Common myeloid progenitor, CD34-positive (primary cell): ENCODE measurements at regions of chr10 and their contacts with region 1.

Region 1: GRCh38 chr10:80504158-80504811 is 33.4 kb upstream of the SH2D4B start:
- DNase-seq: peak in 2 of 3 donors; percentile 33 to 53
- H3K4me3 ChIP-seq: no peak overlapping the region
- H3K27ac ChIP-seq: no peak overlapping the region
- H3K4me1 ChIP-seq: peaks cover 10 to 65% (median 39%) of the 10 kb centered on the region in 4 experiments
- H3K27me3 ChIP-seq: no peaks in the 10 kb centered on the region

Region 2: DNA sequence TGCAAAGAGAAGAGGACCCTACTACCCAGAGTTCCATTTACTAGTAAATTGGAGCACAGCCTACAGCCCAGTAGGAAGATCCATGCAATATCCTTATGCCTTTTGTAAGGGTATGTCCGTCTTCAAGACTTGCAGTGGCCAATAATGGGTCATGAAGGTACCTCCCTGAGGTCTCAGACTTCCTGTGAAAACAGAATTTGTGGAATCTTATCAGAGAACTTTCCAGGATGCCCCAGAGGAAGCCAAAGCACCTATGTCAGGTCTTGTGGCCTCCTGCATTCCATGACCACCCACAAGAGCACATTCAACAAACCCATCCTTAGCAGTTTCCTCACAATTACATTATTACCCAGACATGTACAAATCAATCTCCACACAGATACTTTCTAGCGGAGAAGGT is 114.5 kb before region 1 on chr10:
- CTCF ChIA-PET with region 1: interaction called, 25 read pairs
- POLR2A ChIA-PET with region 1: no interaction called
- DNase-seq: no peak
- H3K4me3 ChIP-seq: no peak overlapping the region
- H3K27ac ChIP-seq: no peak overlapping the region
- H3K4me1 ChIP-seq: peaks cover 0 to 17% (median 12%) of the 10 kb centered on the region in 4 experiments
- H3K27me3 ChIP-seq: no peaks in the 10 kb centered on the region

Region 3: DNA sequence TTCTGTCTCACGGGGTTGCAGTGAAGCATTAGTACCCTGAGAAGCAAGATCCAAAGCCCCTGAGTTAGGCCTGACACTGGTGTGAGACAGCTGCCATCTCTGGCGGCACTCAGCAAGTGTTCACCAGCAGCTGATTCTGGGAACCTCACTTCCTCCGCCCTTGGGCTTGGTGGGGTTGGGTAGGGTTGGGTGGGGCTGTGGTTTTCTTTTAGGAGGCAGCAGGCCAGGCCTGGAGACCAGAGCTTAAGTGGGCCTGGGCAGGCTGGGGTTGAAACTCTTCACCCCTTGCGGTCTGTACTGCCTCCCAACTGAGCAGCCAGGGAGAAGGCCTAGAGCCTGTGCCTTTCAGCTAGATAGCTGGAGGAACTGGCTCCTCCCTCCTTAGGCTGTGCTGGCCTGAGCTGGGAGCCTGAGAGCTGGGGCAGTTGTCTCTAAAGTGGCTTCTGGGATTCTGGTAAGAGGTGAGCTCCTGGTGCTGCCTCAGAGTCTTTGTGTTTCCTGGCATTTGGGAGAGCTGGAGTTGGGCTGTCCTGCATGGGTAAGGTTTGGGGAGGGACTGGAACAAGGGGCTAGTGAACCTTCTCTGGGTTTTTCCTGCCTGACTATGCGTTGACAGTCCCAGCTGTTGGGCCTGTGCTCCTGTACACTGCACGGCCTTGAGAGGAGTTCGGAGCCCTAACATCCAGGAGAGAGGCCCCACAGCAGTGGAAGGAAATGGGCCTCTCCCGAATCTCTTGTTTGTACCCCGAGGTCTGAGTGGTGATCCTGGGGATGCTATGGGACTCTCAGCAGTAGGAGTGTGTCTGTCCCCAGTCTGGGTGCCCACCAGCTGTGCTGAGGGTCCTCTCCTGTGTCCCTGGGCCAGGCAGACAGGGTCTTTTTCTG is 45.0 kb before region 1 on chr10:
- CTCF ChIA-PET with region 1: interaction called, 34 read pairs
- POLR2A ChIA-PET with region 1: interaction called, 3 read pairs
- DNase-seq: peak; percentile 68 to 89 (median 85)
- H3K4me3 ChIP-seq: peak overlapping the region in 4 of 7 experiments; percentile 2 to 51 (median 24)
- H3K27ac ChIP-seq: peak overlapping the region in 1 of 2 experiments; percentile 71
- H3K4me1 ChIP-seq: peaks cover 21 to 88% (median 80%) of the 10 kb centered on the region in 4 experiments
- H3K27me3 ChIP-seq: no peaks in the 10 kb centered on the region

Region 4: GRCh38 chr10:80472234-80473095 is 31.8 kb before region 1 on chr10:
- CTCF ChIA-PET with region 1: interaction called, 43 read pairs
- POLR2A ChIA-PET with region 1: no interaction called
- DNase-seq: no peak
- H3K4me3 ChIP-seq: no peak overlapping the region
- H3K27ac ChIP-seq: no peak overlapping the region
- H3K4me1 ChIP-seq: peaks cover 4 to 17% (median 15%) of the 10 kb centered on the region in 4 experiments
- H3K27me3 ChIP-seq: no peaks in the 10 kb centered on the region

Region 5: DNA sequence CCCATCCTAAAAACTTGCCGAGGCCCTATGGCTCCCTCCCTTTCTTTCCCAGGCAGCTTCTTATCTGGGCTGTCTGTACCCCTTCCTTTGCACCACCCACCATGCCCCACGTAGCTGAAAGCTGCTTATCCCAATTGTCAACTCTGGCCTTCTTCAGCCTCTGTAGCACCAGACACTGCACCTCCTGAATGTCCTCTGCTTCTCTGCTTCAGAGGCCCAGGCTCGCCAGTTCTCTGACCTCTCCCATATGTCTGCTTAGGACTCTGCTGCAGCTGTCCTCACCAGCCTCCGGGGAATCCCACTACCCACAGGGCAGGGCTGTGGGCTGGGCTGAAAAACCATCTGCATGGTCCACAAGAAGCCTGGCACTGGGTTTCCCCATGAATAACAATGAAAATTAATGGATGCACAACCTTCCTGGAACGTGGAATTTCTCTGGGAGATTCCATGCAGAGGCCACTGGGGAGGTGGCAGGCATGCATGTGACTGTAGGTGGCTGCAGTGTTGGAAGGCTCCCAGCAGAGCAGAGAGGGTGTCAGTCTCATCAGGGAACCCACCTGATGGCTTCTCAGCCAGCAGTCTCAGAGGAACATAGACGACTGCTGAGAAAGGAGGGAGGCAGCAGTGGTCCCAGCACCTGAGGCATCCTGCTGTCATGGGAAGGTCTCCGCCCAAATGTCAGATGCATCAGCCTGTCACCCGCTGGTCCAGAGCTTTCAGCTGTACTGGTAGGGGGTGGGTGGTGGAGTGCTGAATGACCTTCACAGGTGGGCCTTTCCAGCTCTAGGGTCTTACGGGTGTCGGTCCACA is 16.6 kb after region 1 on chr10:
- CTCF ChIA-PET with region 1: interaction called, 28 read pairs
- POLR2A ChIA-PET with region 1: no interaction called
- DNase-seq: no peak
- H3K4me3 ChIP-seq: no peak overlapping the region
- H3K27ac ChIP-seq: no peak overlapping the region
- H3K4me1 ChIP-seq: peaks cover 0 to 21% (median 0%) of the 10 kb centered on the region in 4 experiments
- H3K27me3 ChIP-seq: no peaks in the 10 kb centered on the region

Region 6: DNA sequence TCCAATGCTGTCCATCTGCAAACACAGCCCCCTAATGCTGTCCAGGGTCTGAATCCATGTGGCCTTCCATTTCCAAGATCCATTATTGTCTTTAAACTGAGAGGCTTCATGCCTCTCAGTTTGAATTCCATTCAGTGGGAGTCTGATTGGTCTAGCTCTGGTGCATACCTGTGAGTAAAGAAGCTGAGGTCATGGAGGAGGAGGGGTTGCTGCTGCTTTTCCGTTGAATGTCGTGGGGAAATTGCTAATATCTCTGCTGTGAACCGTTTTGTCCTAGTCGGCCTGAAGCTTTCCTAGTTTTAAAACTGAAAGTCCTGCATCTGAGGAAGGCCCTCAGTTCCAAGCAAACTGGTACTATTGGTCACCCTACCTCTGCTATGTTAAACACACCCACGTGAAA is 51.1 kb after region 1 on chr10:
- CTCF ChIA-PET with region 1: no interaction called
- POLR2A ChIA-PET with region 1: no interaction called
- DNase-seq: no peak
- H3K4me3 ChIP-seq: no peak overlapping the region
- H3K27ac ChIP-seq: no peak overlapping the region
- H3K4me1 ChIP-seq: no peaks in the 10 kb centered on the region
- H3K27me3 ChIP-seq: peaks cover 0 to 2% (median 0%) of the 10 kb centered on the region in 5 experiments

Region 7: DNA sequence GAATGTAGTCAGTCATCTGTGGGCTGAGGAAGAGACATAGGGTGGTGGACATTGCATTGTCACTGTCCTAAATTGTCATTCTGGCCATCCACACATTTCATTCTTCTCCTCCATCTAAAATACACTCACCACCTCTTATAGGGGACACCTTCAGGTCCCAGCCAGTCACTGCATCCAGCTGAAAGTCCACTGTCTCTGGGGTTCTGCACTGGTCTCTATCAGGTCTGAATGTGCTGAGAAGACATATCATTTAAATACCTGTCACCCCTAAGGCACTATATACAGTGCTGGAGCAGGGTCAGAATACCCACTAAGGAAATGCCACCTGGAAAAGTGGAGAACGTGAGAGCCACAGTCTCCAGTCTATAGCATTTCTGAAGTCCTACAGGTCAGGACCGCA is 63.0 kb after region 1 on chr10:
- CTCF ChIA-PET with region 1: no interaction called
- POLR2A ChIA-PET with region 1: no interaction called
- DNase-seq: no peak
- H3K4me3 ChIP-seq: no peak overlapping the region
- H3K27ac ChIP-seq: no peak overlapping the region
- H3K4me1 ChIP-seq: no peaks in the 10 kb centered on the region
- H3K27me3 ChIP-seq: peaks cover 0 to 4% (median 0%) of the 10 kb centered on the region in 5 experiments

Region 8: GRCh38 chr10:80699602-80700039 is 195.3 kb after region 1 on chr10:
- CTCF ChIA-PET with region 1: no interaction called
- POLR2A ChIA-PET with region 1: no interaction called
- DNase-seq: peak; percentile 61 to 75 (median 68)
- H3K4me3 ChIP-seq: no peak overlapping the region
- H3K27ac ChIP-seq: no peak overlapping the region
- H3K4me1 ChIP-seq: no peaks in the 10 kb centered on the region
- H3K27me3 ChIP-seq: peaks cover 0 to 2% (median 0%) of the 10 kb centered on the region in 5 experiments

Region 9: DNA sequence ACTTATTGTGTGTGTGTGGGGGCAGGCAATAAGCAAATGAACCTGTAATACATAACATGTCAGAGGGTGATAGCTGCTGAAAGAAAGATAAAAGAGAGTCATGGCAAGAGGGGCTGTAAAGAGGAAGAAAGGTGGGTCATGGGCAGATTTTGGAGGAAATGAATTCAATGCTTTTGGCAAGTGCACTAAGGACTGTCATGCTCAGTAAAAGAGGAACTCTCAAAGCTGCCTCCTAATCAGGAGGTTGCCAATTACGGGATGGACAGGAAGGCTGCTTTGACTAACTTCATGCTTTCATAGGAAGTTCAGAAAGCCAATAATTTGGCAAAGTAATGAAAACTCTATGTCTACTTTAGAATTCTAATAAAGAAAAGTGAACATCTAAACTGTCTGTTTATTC is 434.6 kb after region 1 on chr10:
- CTCF ChIA-PET with region 1: no interaction called
- POLR2A ChIA-PET with region 1: no interaction called
- DNase-seq: peak; percentile 22 to 79 (median 61)
- H3K4me3 ChIP-seq: no peak overlapping the region
- H3K27ac ChIP-seq: no peak overlapping the region
- H3K4me1 ChIP-seq: peaks cover 0 to 19% (median 9%) of the 10 kb centered on the region in 4 experiments
- H3K27me3 ChIP-seq: no peaks in the 10 kb centered on the region